Left ventricle myocardium superior (tissue), 1 donor: ENCODE measurements at regions of chr11 and their contacts with region 1.

Region 1: DNA sequence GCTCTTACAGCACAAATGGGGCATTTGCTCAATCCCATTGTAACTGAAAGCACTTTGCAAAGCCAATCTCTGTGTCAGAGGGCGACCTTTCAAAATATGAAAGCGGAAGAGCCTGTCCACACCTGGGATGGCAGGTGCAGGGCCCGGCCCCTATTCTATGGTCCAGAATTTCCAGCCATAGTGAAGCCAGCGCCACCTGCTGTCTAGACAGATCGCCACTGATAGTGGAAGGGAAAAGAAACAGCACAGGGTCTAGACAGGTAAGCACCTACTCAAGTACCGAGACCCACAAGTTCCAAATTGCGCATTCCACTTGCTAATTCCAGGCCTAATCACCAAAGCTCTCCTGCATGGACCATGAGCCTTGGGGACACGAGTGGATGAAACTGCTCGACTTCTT is 141.4 kb downstream of the NTM start:
- DNase-seq: peak; percentile 56
- ATAC-seq: peak; percentile 53

Region 2: GRCh38 chr11:131064373-131064991 is 447.3 kb before region 1 on chr11:
- intact Hi-C with region 1: loop called (anchors 10 kb)
- DNase-seq: peak; percentile 56
- ATAC-seq: peak; percentile 72

Region 3: GRCh38 chr11:131408025-131408640 is 103.7 kb before region 1 on chr11:
- intact Hi-C with region 1: loop called (anchors 5 kb)
- DNase-seq: peak; percentile 47
- ATAC-seq: peak; percentile 67